Activated T-helper 2 cell treated with anti-CD3 and anti-CD28 coated beads, Interferon-gamma antibody, Interleukin-2, Interleukin-4, amounts not matched to agents 10 μg/mL and 5 μg/mL and 100 μg/mL, durations not matched to agents 14 hours and 24 hours and 36 hours (primary cell): ENCODE measurements at regions of chr9 and their contacts with region 1.

Region 1: GRCh38 chr9:6412487-6413364 is at the start of gene UHRF2:
- DNase-seq: peak; percentile 98
- H3K4me3 Mint-ChIP-seq: peak within 1 kb of the TSS; percentile 96
- H3K27ac Mint-ChIP-seq: peak within 1 kb of the TSS; percentile 94
- H3K4me1 Mint-ChIP-seq: peaks cover 39% of the 10 kb centered on the region
- H3K27me3 Mint-ChIP-seq: peaks cover 2% of the 10 kb centered on the region
- total RNA-seq, gene UHRF2: 79.7 and 82.9 TPM in 2 replicates

Region 2: GRCh38 chr9:5628530-5629311 is 784.0 kb before region 1 on chr9 and contains the start of gene RIC1:
- intact Hi-C with region 1: loop called (anchors 10 kb)
- DNase-seq: peak; percentile 89
- H3K4me3 Mint-ChIP-seq: peak within 1 kb of the TSS; percentile 100
- H3K27ac Mint-ChIP-seq: peak within 1 kb of the TSS; percentile 97
- H3K4me1 Mint-ChIP-seq: peaks cover 56% of the 10 kb centered on the region
- H3K27me3 Mint-ChIP-seq: no peaks in the 10 kb centered on the region
- total RNA-seq, gene RIC1: 21.5 and 22.1 TPM in 2 replicates

Region 3: DNA sequence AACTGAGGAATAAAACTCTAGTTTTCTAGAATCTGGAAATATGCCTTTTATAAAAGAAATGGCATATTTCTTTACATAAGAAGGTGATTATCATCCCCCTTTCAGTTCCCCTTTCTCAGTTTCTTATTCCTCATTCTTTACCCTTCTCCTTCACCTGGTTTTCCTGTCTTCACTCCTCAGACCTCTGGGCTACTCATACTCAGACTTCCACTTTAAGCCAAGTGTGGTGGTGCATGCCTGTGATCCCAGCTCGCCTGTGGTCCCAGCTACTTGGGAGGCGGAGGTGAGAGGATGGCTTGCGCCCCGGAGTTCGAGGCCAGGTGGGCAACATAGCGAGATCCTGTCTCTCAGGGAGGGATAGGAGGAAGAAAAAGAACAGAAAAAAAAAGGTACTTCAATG is 454.5 kb before region 1 on chr9:
- intact Hi-C with region 1: no loop called
- DNase-seq: no peak
- H3K4me3 Mint-ChIP-seq: no peak overlapping the region
- H3K27ac Mint-ChIP-seq: no peak overlapping the region
- H3K4me1 Mint-ChIP-seq: no peaks in the 10 kb centered on the region
- H3K27me3 Mint-ChIP-seq: no peaks in the 10 kb centered on the region

Region 4: GRCh38 chr9:6015278-6016157 is 397.2 kb before region 1 on chr9 and contains the start of gene RANBP6:
- intact Hi-C with region 1: loop called (anchors 2 kb)
- DNase-seq: peak; percentile 87
- H3K4me3 Mint-ChIP-seq: peak within 1 kb of the TSS; percentile 93
- H3K27ac Mint-ChIP-seq: peak within 1 kb of the TSS; percentile 97
- H3K4me1 Mint-ChIP-seq: peaks cover 33% of the 10 kb centered on the region
- H3K27me3 Mint-ChIP-seq: no peaks in the 10 kb centered on the region
- total RNA-seq, gene RANBP6: 20.1 and 21.1 TPM in 2 replicates

Region 5: GRCh38 chr9:6460189-6460768 is 47.6 kb after region 1 on chr9:
- intact Hi-C with region 1: loop called (anchors 5 kb)
- DNase-seq: no peak
- H3K4me3 Mint-ChIP-seq: no peak overlapping the region
- H3K27ac Mint-ChIP-seq: peak overlapping the region; percentile 46
- H3K4me1 Mint-ChIP-seq: peaks cover 16% of the 10 kb centered on the region
- H3K27me3 Mint-ChIP-seq: no peaks in the 10 kb centered on the region

Region 6: DNA sequence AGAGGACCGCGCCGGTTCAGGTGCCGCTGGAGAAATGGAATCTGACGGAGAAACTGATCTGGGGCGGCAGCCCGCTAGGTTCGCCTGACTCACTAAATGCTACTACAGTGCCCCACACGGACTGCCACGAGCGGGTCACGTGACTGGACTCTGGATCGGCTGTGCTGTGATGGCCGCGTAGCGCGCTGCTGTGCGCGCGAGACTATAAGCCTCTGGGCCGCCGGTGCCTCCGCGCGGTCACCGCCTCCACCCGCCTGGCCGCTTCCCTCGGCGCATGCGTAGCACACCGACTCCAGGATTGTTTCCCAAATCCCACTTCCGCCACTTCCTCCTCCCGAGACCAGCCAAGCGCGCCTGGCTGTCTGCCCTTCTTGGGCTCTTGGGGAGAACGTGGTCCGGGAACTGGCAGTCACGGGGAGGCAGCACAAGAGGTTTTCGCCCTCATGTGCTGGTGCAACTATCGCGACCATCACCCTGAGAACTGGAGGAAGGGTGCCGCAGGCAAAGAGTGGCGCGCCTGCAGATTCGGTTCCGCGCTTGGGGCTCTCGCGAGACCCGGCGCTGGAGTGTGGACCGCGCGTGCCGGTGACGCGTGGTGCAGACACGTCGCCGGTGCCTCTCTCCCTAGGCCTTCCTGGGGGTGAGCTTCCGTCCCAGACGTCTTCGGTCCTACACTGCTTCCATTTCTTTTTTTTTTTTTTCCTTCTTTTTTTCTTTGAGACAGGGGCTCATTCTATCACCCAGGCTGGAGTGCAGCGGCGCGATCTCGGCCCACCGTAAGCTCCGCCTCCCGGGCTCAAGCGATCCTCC is 268.6 kb after region 1 on chr9:
- intact Hi-C with region 1: loop called (anchors 1 kb)
- DNase-seq: peak; percentile 89
- H3K4me3 Mint-ChIP-seq: peak overlapping the region; percentile 93
- H3K27ac Mint-ChIP-seq: peak overlapping the region; percentile 99
- H3K4me1 Mint-ChIP-seq: peaks cover 17% of the 10 kb centered on the region
- H3K27me3 Mint-ChIP-seq: no peaks in the 10 kb centered on the region

Region 7: GRCh38 chr9:6894135-6894534 is 481.4 kb after region 1 on chr9:
- intact Hi-C with region 1: loop called (anchors 10 kb)
- DNase-seq: no peak
- H3K4me3 Mint-ChIP-seq: peak overlapping the region; percentile 19
- H3K27ac Mint-ChIP-seq: peak overlapping the region; percentile 74
- H3K4me1 Mint-ChIP-seq: peaks cover 51% of the 10 kb centered on the region
- H3K27me3 Mint-ChIP-seq: no peaks in the 10 kb centered on the region